ENCODE measurements at regions of chr1 and their contacts with region 1.

Region 1: DNA sequence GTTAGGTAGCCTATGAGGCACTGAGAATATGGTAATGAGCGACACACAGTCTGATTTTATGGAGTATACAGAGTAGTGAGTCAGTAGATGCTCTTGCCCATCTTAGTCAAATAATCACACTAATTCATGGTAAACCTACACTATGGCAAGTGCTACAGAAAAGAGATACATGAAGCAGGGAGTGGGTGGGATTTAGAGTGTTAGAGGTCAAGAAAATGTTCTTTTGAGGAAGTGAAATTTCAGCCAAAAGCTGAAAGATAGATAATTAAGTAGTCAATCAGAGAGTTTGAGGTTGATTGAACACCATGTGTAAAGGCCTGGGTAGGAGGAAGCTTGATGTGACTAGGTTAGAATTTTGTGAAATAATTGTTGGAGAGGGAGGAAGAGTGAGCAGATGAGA is 14.7 kb downstream of the MDM4 start:
- DNase-seq: no peak
- H3K4me3 ChIP-seq: no peak overlapping the region
- H3K4me3 Mint-ChIP-seq: no peak overlapping the region
- H3K27ac ChIP-seq: no peak overlapping the region
- H3K27ac Mint-ChIP-seq: peak overlapping the region in 5 of 7 donors; percentile 1 to 85 (median 46)
- H3K4me1 ChIP-seq: no peaks in the 10 kb centered on the region
- H3K4me1 Mint-ChIP-seq: peaks cover 10 to 17% (median 13%) of the 10 kb centered on the region in 4 donors
- H3K27me3 ChIP-seq: no peaks in the 10 kb centered on the region
- H3K27me3 Mint-ChIP-seq: no peaks in the 10 kb centered on the region

Region 2: DNA sequence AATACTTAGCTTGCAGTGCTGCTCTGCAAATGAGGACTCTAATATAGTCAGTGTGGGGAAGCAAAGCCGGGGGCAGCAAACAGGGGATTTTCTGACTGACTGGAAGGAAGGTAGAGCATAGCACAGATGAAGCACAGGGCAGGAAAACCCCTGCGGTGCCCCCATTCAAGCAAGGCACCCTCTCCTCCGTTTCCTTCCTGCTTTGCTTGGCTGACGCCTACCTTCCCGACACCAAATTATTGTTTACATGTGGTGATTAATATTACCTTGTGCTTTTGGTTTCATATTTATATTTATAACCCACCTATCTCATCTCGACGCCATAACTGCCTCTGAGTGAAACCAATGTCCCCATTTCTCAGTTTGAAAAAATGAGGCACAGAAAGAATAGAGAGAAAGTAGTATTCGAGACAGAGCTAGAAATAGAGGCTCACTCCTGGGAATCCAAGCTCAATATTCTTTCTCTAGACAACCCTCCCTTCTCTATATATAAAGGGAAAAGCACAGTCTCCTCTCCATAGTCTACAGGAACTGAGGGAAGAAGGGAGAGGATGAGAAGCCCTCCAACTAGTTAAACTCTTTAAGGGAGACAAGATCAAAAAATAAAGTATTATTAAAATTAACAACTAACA is 77.7 kb before region 1 on chr1:
- CTCF ChIA-PET with region 1: no interaction called
- POLR2A ChIA-PET with region 1: no interaction called
- intact Hi-C with region 1: no loop called
- DNase-seq: peak; percentile 79 to 96 (median 88)
- H3K4me3 ChIP-seq: peak overlapping the region in 1 of 2 donors; percentile 21
- H3K4me3 Mint-ChIP-seq: peak overlapping the region; percentile 63 to 81 (median 73)
- H3K27ac ChIP-seq: peak overlapping the region; percentile 76
- H3K27ac Mint-ChIP-seq: peak overlapping the region; percentile 86 to 98 (median 96)
- H3K4me1 ChIP-seq: peaks cover 48% of the 10 kb centered on the region
- H3K4me1 Mint-ChIP-seq: peaks cover 26 to 63% (median 43%) of the 10 kb centered on the region in 4 donors
- H3K27me3 ChIP-seq: no peaks in the 10 kb centered on the region
- H3K27me3 Mint-ChIP-seq: no peaks in the 10 kb centered on the region

Region 3: GRCh38 chr1:204544321-204544720 is 13.4 kb after region 1 on chr1:
- CTCF ChIA-PET with region 1: interaction called, 3 read pairs
- POLR2A ChIA-PET with region 1: interaction called, 16 read pairs
- intact Hi-C with region 1: no loop called
- DNase-seq: peak; percentile 51 to 72 (median 62)
- H3K4me3 ChIP-seq: no peak overlapping the region
- H3K4me3 Mint-ChIP-seq: peak overlapping the region; percentile 11 to 80 (median 53)
- H3K27ac ChIP-seq: peak overlapping the region; percentile 56
- H3K27ac Mint-ChIP-seq: peak overlapping the region; percentile 25 to 88 (median 76)
- H3K4me1 ChIP-seq: peaks cover 51% of the 10 kb centered on the region
- H3K4me1 Mint-ChIP-seq: peaks cover 34 to 60% (median 47%) of the 10 kb centered on the region in 4 donors
- H3K27me3 ChIP-seq: no peaks in the 10 kb centered on the region
- H3K27me3 Mint-ChIP-seq: no peaks in the 10 kb centered on the region

Region 4: DNA sequence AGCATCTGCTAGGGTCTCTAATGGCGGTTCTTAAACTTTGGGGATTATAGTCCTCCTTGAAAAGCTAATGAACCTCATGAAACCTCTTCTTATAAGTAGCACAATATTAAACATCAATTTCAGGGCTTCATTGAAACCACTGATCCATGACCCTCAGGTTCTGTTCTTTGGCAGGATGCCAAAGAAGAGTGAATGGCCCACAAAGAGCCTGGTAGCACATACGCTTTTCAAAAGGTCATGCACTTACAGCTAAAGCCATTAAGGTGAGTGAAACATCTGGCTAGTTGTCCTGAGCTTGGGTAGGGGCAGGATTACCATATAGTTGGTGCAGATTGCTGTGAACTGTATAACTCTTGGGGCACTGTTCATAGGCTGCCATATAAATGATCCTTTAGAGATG is 27.5 kb after region 1 on chr1:
- CTCF ChIA-PET with region 1: no interaction called
- POLR2A ChIA-PET with region 1: no interaction called
- intact Hi-C with region 1: no loop called
- DNase-seq: no peak
- H3K4me3 ChIP-seq: no peak overlapping the region
- H3K4me3 Mint-ChIP-seq: no peak overlapping the region
- H3K27ac ChIP-seq: no peak overlapping the region
- H3K27ac Mint-ChIP-seq: peak overlapping the region in 1 of 7 donors; percentile 7
- H3K4me1 ChIP-seq: peaks cover 22% of the 10 kb centered on the region
- H3K4me1 Mint-ChIP-seq: peaks cover 31 to 52% (median 42%) of the 10 kb centered on the region in 4 donors
- H3K27me3 ChIP-seq: no peaks in the 10 kb centered on the region
- H3K27me3 Mint-ChIP-seq: no peaks in the 10 kb centered on the region

Measured in CD4-positive, alpha-beta memory T cell (primary cell).